Activated CD4-positive, alpha-beta memory T cell treated with anti-CD3 and anti-CD28 coated beads for 36 hours (primary cell): ENCODE measurements at regions of chr19 and their contacts with region 1.

Region 1: GRCh38 chr19:506404-507285 is 652 bp upstream of the TPGS1 start:
- DNase-seq: peak; percentile 95
- H3K4me3 Mint-ChIP-seq: peak overlapping the region; percentile 89
- H3K27ac Mint-ChIP-seq: peak overlapping the region; percentile 100
- H3K4me1 Mint-ChIP-seq: peaks cover 40% of the 10 kb centered on the region
- H3K27me3 Mint-ChIP-seq: no peaks in the 10 kb centered on the region

Region 2: GRCh38 chr19:344625-345319 is 161.9 kb before region 1 on chr19 and contains the start of gene MIER2:
- CTCF ChIA-PET with region 1: interaction called, 5 read pairs
- POLR2A ChIA-PET with region 1: no interaction called
- intact Hi-C with region 1: loop called (anchors 1 kb)
- DNase-seq: peak; percentile 92
- H3K4me3 Mint-ChIP-seq: peak within 1 kb of the TSS; percentile 76
- H3K27ac Mint-ChIP-seq: peak within 1 kb of the TSS; percentile 69
- H3K4me1 Mint-ChIP-seq: peaks cover 48% of the 10 kb centered on the region
- H3K27me3 Mint-ChIP-seq: peaks cover 7% of the 10 kb centered on the region
- total RNA-seq, gene MIER2: 22.1 to 23.1 TPM

Region 3: GRCh38 chr19:488505-489417 is 17.9 kb before region 1 on chr19:
- CTCF ChIA-PET with region 1: interaction called, 26 read pairs
- POLR2A ChIA-PET with region 1: interaction called, 16 read pairs
- intact Hi-C with region 1: loop called (anchors 1 kb)
- DNase-seq: peak; percentile 95
- H3K4me3 Mint-ChIP-seq: peak overlapping the region; percentile 78
- H3K27ac Mint-ChIP-seq: peak overlapping the region; percentile 79
- H3K4me1 Mint-ChIP-seq: peaks cover 5% of the 10 kb centered on the region
- H3K27me3 Mint-ChIP-seq: peaks cover 12% of the 10 kb centered on the region

Region 4: DNA sequence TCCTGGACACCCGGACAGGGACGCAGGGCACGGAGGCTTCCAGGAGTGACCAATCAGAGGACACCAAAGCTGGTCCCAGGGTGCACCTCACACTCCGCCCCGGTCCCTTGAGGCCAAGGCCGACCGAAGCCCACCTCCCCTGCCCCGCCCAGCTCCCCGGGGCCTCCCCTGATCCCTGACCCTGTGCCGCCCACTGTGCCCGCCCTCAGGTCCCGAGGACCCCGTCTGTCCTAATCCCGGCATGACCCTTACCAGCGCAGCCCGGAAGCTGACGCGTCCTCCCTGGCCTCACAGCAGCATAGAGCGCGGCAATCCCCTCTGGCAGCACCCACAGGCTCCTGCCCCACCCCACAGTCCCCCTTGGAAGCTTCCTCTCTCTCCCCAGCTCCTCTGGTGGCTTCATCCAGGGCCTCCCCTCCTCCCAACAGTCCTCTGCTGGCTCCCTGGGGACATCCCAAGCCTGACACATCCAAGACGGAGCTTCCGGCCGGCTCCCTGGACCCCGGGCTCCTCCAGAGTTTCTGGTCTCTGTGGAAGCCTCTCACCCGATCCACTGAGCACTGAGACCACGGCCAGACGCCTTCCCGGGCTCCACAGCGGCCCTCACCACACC is 17.5 kb after region 1 on chr19:
- CTCF ChIA-PET with region 1: interaction called, 25 read pairs
- POLR2A ChIA-PET with region 1: interaction called, 6 read pairs
- intact Hi-C with region 1: no loop called
- DNase-seq: no peak
- H3K4me3 Mint-ChIP-seq: no peak overlapping the region
- H3K27ac Mint-ChIP-seq: no peak overlapping the region
- H3K4me1 Mint-ChIP-seq: peaks cover 3% of the 10 kb centered on the region
- H3K27me3 Mint-ChIP-seq: peaks cover 3% of the 10 kb centered on the region

Region 5: GRCh38 chr19:554817-555216 is 48.2 kb after region 1 on chr19:
- CTCF ChIA-PET with region 1: no interaction called
- POLR2A ChIA-PET with region 1: no interaction called
- intact Hi-C with region 1: no loop called
- DNase-seq: no peak
- H3K4me3 Mint-ChIP-seq: no peak overlapping the region
- H3K27ac Mint-ChIP-seq: no peak overlapping the region
- H3K4me1 Mint-ChIP-seq: no peaks in the 10 kb centered on the region
- H3K27me3 Mint-ChIP-seq: no peaks in the 10 kb centered on the region

Region 6: DNA sequence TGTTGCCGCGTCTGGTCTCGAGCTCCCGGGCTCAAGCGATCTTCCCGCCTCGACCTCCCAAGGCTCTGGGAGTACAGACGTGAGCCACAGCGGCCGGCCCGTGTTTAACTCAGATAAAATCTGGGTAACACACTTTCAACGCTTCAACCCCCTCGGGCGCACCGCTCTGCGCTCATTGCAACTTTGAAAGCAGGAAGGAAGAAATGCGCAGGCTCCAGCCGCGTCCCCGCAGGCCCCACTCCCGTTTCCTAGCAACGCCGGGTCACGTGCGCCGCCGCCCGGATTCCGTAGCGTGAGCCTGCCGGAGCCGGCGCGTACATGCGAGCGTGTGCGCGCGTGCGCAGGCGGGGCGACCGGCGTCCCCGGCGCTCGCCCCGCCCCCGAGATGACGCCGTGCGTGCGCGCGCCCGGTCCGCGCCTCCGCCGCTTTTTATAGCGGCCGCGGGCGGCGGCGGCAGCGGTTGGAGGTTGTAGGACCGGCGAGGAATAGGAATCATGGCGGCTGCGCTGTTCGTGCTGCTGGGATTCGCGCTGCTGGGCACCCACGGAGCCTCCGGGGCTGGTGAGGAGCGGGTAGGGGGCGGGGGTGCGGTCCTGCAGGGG is 65.6 kb after region 1 on chr19 and contains the start of gene BSG:
- CTCF ChIA-PET with region 1: interaction called, 8 read pairs
- POLR2A ChIA-PET with region 1: interaction called, 5 read pairs
- intact Hi-C with region 1: loop called (anchors 2 kb)
- DNase-seq: peak; percentile 99
- H3K4me3 Mint-ChIP-seq: peak within 1 kb of the TSS; percentile 92
- H3K27ac Mint-ChIP-seq: peak within 1 kb of the TSS; percentile 93
- H3K4me1 Mint-ChIP-seq: peaks cover 35% of the 10 kb centered on the region
- H3K27me3 Mint-ChIP-seq: no peaks in the 10 kb centered on the region
- total RNA-seq, gene BSG: 185 to 205 TPM